Mammary epithelial cell (primary cell): ENCODE measurements at regions of chr6 and their contacts with region 1.

Region 1: GRCh38 chr6:56637640-56638039 is 5.0 kb downstream of the DST start:
- DNase-seq: peak; percentile 46
- H3K4me3 ChIP-seq: peak overlapping the region; percentile 69 to 94 (median 85)
- H3K27ac ChIP-seq: peak overlapping the region; percentile 96
- H3K4me1 ChIP-seq: peaks cover 17% of the 10 kb centered on the region
- H3K27me3 ChIP-seq: no peaks in the 10 kb centered on the region
- CTCF ChIP-seq: peak; percentile 50 to 59

Region 2: DNA sequence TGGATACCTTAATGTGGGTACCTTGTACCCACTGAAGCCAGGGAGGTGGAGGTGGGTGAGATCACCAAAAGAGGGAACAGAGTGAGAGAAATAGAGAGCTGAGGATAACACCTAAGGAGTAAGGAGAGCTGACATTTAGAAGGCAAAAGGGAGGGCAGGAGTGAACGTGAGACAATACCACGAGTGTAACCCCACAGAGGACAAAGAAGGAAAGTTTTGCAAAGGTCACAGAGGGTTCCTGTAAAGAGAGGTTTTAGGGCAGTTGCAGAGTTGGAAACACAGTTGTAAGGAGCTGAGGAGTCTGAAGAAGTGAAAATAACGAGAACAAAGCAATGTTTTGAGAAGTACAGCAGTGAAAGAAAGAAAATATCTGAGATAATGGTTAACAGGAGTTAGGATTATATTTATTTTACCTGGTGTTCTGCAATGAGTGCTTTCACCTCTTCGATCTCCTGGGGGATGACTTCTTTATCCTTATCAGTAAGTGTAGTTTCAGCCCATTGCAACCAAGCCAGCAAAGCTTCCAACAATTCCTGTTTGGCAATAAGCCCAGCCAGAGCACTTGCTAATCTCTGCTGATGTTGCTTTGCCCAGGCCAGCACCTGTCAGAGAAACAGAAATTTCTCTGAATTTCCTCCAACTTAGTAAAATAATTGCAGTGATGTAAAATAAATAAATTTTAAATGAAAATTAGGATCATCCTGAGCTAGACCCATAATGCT is 161.7 kb before region 1 on chr6:
- CTCF ChIA-PET with region 1: no interaction called
- dilution Hi-C with region 1: no loop called
- in situ Hi-C with region 1: no loop called
- intact Hi-C with region 1: no loop called
- DNase-seq: no peak
- H3K4me3 ChIP-seq: no peak overlapping the region
- H3K27ac ChIP-seq: no peak overlapping the region
- H3K4me1 ChIP-seq: no peaks in the 10 kb centered on the region
- H3K27me3 ChIP-seq: no peaks in the 10 kb centered on the region
- CTCF ChIP-seq: no peak

Region 3: DNA sequence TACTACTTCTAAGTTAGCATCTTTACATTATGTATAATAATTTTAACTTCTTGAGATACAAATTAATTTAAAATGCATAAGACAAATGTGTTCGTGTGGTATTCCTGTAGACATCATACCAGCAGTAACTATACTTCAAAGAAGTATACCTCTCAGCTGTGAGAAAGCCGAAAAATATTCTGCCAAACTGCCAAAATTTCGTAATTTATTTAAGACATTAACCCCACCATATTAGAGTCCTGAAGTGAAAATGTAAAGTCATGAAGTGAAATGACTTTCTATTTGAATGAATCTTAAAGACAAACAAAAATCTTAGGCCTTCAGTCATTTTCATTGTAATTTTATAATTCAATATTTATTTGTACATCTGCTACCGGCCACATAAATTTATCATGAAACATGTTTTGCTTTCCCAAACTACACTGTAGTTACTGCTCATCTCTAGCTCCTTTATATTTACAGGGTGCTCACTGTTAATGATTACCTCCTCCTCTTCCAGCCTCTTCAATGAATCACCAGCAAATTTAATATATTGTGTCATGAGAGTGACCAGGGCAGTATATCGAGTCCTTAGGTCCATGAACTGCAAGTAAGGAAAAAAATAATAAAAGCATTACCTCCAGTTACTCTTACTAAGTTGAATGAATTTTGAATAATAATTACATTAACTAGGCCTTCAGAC is 13.5 kb before region 1 on chr6:
- CTCF ChIA-PET with region 1: no interaction called
- dilution Hi-C with region 1: no loop called
- in situ Hi-C with region 1: no loop called
- intact Hi-C with region 1: no loop called
- DNase-seq: no peak
- H3K4me3 ChIP-seq: no peak overlapping the region
- H3K27ac ChIP-seq: no peak overlapping the region
- H3K4me1 ChIP-seq: no peaks in the 10 kb centered on the region
- H3K27me3 ChIP-seq: no peaks in the 10 kb centered on the region
- CTCF ChIP-seq: no peak

Region 4: GRCh38 chr6:56652994-56653393 is 15.4 kb after region 1 on chr6:
- CTCF ChIA-PET with region 1: interaction called, 4 read pairs
- dilution Hi-C with region 1: no loop called
- in situ Hi-C with region 1: no loop called
- intact Hi-C with region 1: loop called (anchors 1 kb)
- DNase-seq: peak; percentile 89
- H3K4me3 ChIP-seq: peak overlapping the region in 2 of 3 experiments; percentile 19 to 37
- H3K27ac ChIP-seq: peak overlapping the region; percentile 95
- H3K4me1 ChIP-seq: peaks cover 52% of the 10 kb centered on the region
- H3K27me3 ChIP-seq: no peaks in the 10 kb centered on the region
- CTCF ChIP-seq: no peak

Region 5: GRCh38 chr6:56671651-56672461 is 34.2 kb after region 1 on chr6:
- CTCF ChIA-PET with region 1: no interaction called
- dilution Hi-C with region 1: no loop called
- in situ Hi-C with region 1: no loop called
- intact Hi-C with region 1: loop called (anchors 1 kb)
- DNase-seq: no peak
- H3K4me3 ChIP-seq: no peak overlapping the region
- H3K27ac ChIP-seq: no peak overlapping the region
- H3K4me1 ChIP-seq: peaks cover 32% of the 10 kb centered on the region
- H3K27me3 ChIP-seq: no peaks in the 10 kb centered on the region
- CTCF ChIP-seq: no peak

Region 6: GRCh38 chr6:56757588-56757984 is 119.9 kb after region 1 on chr6:
- CTCF ChIA-PET with region 1: no interaction called
- dilution Hi-C with region 1: no loop called
- in situ Hi-C with region 1: no loop called
- intact Hi-C with region 1: loop called (anchors 1 kb)
- DNase-seq: peak; percentile 35
- H3K4me3 ChIP-seq: no peak overlapping the region
- H3K27ac ChIP-seq: no peak overlapping the region
- H3K4me1 ChIP-seq: peaks cover 42% of the 10 kb centered on the region
- H3K27me3 ChIP-seq: no peaks in the 10 kb centered on the region
- CTCF ChIP-seq: peak; percentile 55 to 76

Region 7: GRCh38 chr6:56851541-56852259 is 214.1 kb after region 1 on chr6:
- CTCF ChIA-PET with region 1: no interaction called
- dilution Hi-C with region 1: no loop called
- in situ Hi-C with region 1: loop called in 1 of 2 experiments (anchors 25 kb)
- intact Hi-C with region 1: loop called (anchors 2 kb)
- DNase-seq: peak; percentile 81
- H3K4me3 ChIP-seq: peak overlapping the region; percentile 41 to 51 (median 49)
- H3K27ac ChIP-seq: peak overlapping the region; percentile 30
- H3K4me1 ChIP-seq: peaks cover 25% of the 10 kb centered on the region
- H3K27me3 ChIP-seq: no peaks in the 10 kb centered on the region
- CTCF ChIP-seq: peak; percentile 60 to 75